Sigmoid colon (tissue), 7 donors: ENCODE measurements at regions of chr9 and their contacts with region 1.

Region 1: DNA sequence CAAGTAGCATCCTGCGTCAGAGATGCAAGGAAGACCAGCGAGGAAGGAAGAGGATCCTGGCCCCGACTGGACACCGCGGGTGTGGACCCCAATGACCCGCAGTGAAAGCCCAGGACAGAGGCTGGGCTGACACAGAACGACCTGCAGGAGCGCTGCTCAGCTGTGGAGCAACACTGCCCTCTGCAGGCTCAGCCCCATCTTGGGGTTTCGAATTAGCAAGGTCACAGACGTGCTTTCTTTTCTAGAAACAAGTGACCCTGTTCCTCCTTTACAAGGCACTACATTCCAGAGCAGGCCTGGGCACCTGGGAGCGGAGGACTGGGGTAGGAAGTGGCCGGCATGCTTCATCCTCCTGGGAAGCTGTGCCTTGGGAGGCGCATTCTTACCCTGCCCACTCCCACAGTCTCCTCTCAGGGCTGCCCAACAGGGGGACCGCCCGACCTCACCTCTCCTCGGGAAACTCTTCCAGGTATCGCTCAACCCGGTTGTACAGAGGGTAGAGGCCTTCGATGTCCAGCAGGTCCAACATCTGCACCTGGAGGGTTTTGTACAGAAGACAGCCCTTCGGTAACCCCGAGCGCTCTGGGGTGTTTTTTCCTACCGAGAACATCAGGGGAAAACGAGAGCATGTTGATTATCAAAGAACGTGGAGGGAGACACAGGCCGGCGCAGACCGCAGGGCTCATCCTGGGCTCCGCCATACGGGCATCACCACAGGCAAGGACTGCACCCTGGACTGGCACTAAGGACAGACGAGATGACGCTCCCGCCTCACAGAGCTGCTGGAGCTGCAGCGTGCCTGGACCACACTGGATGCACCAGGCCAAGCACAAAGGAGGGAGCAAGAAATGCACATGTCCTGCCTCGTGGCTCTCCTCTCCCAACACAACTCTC is 35.0 kb downstream of the IPPK start:
- DNase-seq: peak; percentile 90
- H3K4me3 ChIP-seq: peak overlapping the region in 1 of 4 donors; percentile 21
- H3K27ac ChIP-seq: peak overlapping the region in 3 of 4 donors; percentile 30 to 58 (median 48)
- H3K4me1 ChIP-seq: peaks cover 0 to 15% (median 5%) of the 10 kb centered on the region in 4 donors
- H3K27me3 ChIP-seq: no peaks in the 10 kb centered on the region
- CTCF ChIP-seq: peak; percentile 95 to 98 (median 97)
- EP300 ChIP-seq: no peak
- POLR2A ChIP-seq: no peak

Region 2: GRCh38 chr9:92133949-92134604 is 500.9 kb before region 1 on chr9:
- intact Hi-C with region 1: loop called (anchors 10 kb)
- DNase-seq: peak; percentile 89
- H3K4me3 ChIP-seq: peak overlapping the region in 1 of 4 donors; percentile 13
- H3K27ac ChIP-seq: peak overlapping the region; percentile 5 to 34 (median 26)
- H3K4me1 ChIP-seq: peaks cover 0 to 11% (median 10%) of the 10 kb centered on the region in 4 donors
- H3K27me3 ChIP-seq: no peaks in the 10 kb centered on the region
- CTCF ChIP-seq: peak; percentile 55 to 97 (median 80)
- EP300 ChIP-seq: no peak
- POLR2A ChIP-seq: no peak

Region 3: GRCh38 chr9:92325269-92325990 is 309.5 kb before region 1 on chr9 and contains the starts of genes CENPP and NOL8:
- intact Hi-C with region 1: loop called (anchors 1 kb)
- DNase-seq: peak; percentile 90
- H3K4me3 ChIP-seq: peak within 1 kb of the TSS; percentile 66 to 84 (median 71)
- H3K27ac ChIP-seq: peak within 1 kb of the TSS; percentile 90 to 96 (median 92)
- H3K4me1 ChIP-seq: peaks cover 0 to 21% (median 16%) of the 10 kb centered on the region in 4 donors
- H3K27me3 ChIP-seq: no peaks in the 10 kb centered on the region
- CTCF ChIP-seq: no peak
- EP300 ChIP-seq: peak in 1 of 4 donors; percentile 2
- POLR2A ChIP-seq: peak in 1 of 2 donors; percentile 31
- total RNA-seq, gene CENPP: 1.8 to 11.9 (median 5.2) TPM
- total RNA-seq, gene NOL8: 23.9 to 32.1 (median 28.2) TPM

Region 4: GRCh38 chr9:92342825-92343488 is 292.0 kb before region 1 on chr9:
- intact Hi-C with region 1: loop called (anchors 1 kb)
- DNase-seq: no peak
- H3K4me3 ChIP-seq: no peak overlapping the region
- H3K27ac ChIP-seq: peak overlapping the region in 2 of 4 donors; percentile 17 to 57
- H3K4me1 ChIP-seq: peaks cover 0 to 16% (median 2%) of the 10 kb centered on the region in 4 donors
- H3K27me3 ChIP-seq: no peaks in the 10 kb centered on the region
- CTCF ChIP-seq: peak in 3 of 4 experiments; percentile 25 to 46 (median 39)
- EP300 ChIP-seq: no peak
- POLR2A ChIP-seq: no peak

Region 5: DNA sequence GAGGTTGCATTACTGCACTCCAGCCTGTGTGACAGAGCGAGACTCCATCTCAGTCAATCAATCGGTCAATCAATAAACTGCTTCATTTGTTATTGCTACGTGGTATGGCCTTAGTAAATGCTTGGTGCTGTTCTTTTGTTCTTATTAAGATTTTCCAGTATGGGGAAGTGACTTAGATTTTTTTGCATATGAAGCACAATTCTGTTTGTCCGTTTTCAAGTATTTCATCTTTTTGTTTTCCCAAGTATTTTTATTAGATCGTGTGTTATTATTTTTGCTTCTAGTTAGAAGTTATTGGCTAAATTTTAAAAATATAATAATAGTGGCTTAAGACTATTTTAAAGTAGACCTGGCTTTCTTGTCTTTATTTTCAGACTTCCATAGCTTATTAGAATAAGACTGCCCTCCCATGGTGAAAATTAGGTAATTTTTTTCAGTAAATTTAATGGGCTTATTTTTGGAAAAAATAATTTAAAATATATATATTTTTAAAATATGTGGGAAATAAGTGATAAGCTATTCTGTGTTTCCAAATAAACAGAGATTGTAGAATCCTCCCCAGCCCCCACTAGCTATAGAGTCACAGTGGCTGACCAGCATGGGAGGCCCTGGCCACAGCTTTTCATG is 195.9 kb before region 1 on chr9:
- intact Hi-C with region 1: loop called (anchors 5 kb)
- DNase-seq: no peak
- H3K4me3 ChIP-seq: no peak overlapping the region
- H3K27ac ChIP-seq: no peak overlapping the region
- H3K4me1 ChIP-seq: peaks cover 0 to 6% (median 2%) of the 10 kb centered on the region in 4 donors
- H3K27me3 ChIP-seq: no peaks in the 10 kb centered on the region
- CTCF ChIP-seq: peak; percentile 7 to 48 (median 22)
- EP300 ChIP-seq: no peak
- POLR2A ChIP-seq: no peak